ENCODE measurements at regions of chr10 and their contacts with region 1.

Region 1: DNA sequence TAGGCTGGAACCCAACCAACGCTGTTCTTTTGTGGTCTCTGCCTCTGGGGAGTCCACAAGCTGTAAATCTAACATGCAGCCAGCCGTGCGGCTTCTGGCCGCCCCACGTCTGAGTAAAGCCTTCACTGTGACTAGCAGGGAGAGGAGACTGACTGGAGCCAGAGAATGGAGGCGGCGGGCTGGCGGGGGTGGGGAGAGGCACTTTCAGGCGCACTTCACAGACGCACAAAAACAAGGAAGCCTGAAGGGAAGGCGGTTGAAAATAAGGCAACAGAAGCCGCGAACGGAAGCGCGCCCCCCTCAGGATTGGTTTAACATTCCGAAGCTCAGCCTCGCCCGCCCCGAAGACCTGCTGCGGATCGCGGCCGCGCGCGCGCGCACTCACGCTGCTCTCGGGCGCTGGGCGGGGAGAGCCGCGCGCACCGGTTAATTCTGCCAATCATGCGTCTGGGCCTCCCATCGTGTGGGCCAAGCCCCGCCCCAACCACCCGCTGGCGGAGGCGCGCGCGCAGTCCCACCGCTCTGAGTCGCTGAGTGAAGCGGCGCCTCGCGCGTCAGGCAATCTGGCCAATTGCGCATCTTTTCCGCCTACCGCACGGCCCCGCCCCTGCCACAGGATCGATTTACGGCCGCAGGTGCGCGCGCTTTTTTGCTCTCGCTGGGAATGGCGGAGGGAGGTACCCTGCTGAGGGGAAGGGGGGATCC is at the start of gene SFR1:
- DNase-seq: peak; percentile 95 to 100 (median 99)

Region 2: DNA sequence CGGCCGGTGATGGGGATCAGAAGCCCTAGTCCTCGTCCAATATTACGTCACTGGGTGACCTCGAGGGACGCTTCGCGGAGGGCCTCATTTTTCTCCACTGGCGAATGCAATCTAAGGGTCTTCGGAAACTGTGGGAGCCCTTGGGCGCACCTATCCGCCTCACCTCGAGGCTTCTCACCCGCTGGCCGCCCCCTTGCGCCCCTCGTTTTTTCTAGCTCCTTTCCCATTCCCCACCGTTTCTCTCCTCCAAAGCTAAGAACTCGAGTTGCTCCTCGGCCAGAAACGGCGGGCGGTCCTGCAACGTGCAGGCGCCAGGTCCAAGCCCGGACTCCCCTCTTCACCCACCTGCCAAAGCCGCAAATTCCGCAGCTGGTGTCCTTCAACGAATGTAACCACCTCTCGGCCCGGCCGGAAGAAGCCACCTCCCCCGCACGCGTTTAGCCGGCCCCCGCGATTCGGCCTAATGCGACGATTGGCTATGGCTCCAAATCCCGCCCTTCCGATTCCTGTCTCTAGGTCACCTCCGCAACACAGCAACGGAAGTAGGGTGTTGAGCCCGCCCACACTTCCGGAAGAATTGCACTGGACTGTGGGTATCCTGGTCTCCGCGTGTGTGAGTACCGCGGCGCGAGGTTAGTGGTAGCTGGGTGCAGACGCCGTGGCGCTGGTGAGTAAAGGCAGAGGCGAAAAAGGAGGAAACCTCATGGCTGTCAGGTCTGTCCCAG is 725.4 kb before region 1 on chr10 and contains the starts of genes ATP5MK and PDCD11:
- intact Hi-C with region 1: no loop called
- DNase-seq: peak; percentile 97 to 100 (median 98)

Region 3: GRCh38 chr10:103918053-103918846 is 203.4 kb before region 1 on chr10 and contains the start of gene STN1:
- intact Hi-C with region 1: loop called (anchors 5 kb)
- DNase-seq: peak; percentile 94 to 100 (median 98)

Region 4: GRCh38 chr10:104028146-104028545 is 93.5 kb before region 1 on chr10:
- intact Hi-C with region 1: loop called (anchors 5 kb)
- DNase-seq: peak in 8 of 10 donors; percentile 51 to 95 (median 69)

Region 5: DNA sequence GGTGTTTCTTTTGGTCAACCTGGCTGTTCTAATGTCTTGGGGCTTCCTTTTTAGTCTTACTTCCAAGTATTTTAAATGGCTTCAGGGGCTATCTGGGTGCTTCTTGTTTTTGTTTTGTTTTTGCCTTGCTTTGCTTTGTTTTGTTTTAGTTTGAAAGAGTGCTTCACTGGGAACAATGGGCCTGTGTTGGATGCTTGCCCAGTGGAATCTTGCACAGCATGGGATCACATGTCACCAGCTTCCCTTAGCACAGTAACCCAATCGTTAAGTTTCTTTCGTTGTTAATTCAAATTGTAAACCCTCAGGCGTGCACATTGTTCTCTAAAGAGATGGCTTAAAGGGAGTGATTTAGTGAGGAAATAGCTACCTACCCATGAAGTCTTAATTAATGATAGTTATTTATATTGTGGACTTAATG is 44.9 kb before region 1 on chr10:
- intact Hi-C with region 1: loop called (anchors 2 kb)
- DNase-seq: peak in 7 of 10 donors; percentile 24 to 89 (median 47)

Region 6: DNA sequence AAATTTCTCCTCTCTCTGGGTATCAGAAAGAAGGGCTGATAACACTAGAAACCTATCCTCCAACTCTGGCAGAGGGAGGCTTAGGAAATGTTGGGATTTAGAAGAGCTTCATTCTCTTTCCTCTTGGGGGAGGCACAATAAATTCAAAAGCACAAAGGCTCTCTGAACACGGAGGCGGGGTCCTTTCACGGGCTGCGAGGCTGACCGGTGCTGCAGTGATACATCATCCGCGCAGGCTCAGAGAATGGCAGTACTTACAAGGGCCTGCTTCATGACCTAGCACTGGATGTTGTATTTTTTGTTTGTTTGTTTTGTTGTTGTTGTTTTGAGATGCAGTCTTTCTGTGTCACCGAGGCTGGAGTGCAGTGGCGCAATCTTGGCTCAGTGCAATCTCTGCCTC is 825.6 kb after region 1 on chr10:
- intact Hi-C with region 1: no loop called
- DNase-seq: no peak